ENCODE measurements at regions of chr5 and their contacts with region 1.

Region 1: DNA sequence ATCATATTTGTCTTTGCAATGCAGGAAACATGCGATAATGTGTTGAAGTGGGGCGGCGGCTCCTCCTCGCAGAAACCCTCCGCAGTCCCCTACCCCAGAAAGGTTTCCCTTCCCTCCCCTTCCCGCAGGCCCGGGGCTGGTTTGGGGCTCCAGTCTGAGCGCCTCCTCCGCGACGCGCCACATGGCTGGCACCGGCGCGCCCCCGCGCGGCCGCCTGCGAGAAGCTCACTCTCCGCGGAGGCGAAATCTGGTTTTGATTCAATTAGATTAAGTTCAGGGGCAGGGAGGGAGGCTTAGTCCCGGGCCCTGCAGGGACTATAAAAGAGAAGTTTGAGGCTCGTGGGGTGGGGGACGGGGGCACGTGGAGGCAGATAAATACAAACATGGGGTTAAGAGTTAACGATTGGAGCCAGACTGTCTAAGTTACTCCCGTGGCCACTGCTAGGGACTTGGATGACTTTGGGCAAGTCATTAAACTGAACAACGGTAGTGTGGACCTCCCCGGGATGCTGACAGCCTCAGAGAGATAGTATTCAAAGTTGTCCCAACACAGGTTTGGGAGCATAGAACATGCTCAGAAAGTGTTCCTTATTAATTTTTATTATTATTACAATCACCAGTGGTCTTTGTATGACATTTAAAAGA is 69.4 kb downstream of the MSX2 start:
- DNase-seq: peak; percentile 17
- ATAC-seq: peak; percentile 96
- H3K4me3 ChIP-seq: peak overlapping the region in 1 of 2 experiments; percentile 35; a peak in 2 of 4 replicates
- H3K27ac ChIP-seq: no peak overlapping the region
- H3K4me1 ChIP-seq: no peaks in the 10 kb centered on the region; the same call in 1 of the 2 replicates
- H3K27me3 ChIP-seq: peaks cover 5% of the 10 kb centered on the region; the same call in 1 of the 2 replicates
- CTCF ChIP-seq: peak; percentile 98

Region 2: GRCh38 chr5:175288048-175288621 is 494.3 kb after region 1 on chr5:
- CTCF ChIA-PET with region 1: interaction called, 10 read pairs
- POLR2A ChIA-PET with region 1: no interaction called
- in situ Hi-C with region 1: no loop called
- intact Hi-C with region 1: no loop called
- DNase-seq: no peak
- ATAC-seq: peak; percentile 53
- H3K4me3 ChIP-seq: no peak overlapping the region
- H3K27ac ChIP-seq: no peak overlapping the region
- H3K4me1 ChIP-seq: no peaks in the 10 kb centered on the region
- H3K27me3 ChIP-seq: no peaks in the 10 kb centered on the region
- CTCF ChIP-seq: no peak